Caco-2 (cell line): ENCODE measurements at regions of chr1 and their contacts with region 1.

Region 1: DNA sequence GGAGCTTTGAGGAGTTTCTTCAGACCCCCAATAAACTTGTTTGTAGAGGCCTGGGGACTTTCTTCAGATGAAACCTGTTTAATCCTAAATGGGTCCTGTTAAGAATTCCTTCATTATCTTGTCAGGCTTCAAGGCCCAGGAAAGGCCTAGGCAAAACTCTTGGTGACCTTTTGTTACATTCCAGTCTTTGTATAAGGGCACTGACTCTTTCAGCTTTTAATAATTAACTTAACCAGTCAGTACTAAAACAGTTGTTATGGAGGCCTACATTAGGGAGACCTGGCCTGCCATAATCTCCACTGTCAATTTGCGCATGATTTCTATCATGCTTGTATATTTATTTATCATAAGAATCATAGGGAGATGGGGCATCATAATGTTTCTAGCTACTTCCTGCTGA is 110.2 kb downstream of the FCRL5 start:
- DNase-seq: peak; percentile 72 to 75
- H3K4me3 ChIP-seq: no peak overlapping the region
- H3K4me3 Mint-ChIP-seq: peak overlapping the region; percentile 48
- H3K27ac Mint-ChIP-seq: peak overlapping the region; percentile 79
- H3K4me1 ChIP-seq: peaks cover 51% of the 10 kb centered on the region
- H3K4me1 Mint-ChIP-seq: peaks cover 24% of the 10 kb centered on the region
- H3K27me3 ChIP-seq: no peaks in the 10 kb centered on the region
- H3K27me3 Mint-ChIP-seq: no peaks in the 10 kb centered on the region
- CTCF ChIP-seq: no peak

Region 2: DNA sequence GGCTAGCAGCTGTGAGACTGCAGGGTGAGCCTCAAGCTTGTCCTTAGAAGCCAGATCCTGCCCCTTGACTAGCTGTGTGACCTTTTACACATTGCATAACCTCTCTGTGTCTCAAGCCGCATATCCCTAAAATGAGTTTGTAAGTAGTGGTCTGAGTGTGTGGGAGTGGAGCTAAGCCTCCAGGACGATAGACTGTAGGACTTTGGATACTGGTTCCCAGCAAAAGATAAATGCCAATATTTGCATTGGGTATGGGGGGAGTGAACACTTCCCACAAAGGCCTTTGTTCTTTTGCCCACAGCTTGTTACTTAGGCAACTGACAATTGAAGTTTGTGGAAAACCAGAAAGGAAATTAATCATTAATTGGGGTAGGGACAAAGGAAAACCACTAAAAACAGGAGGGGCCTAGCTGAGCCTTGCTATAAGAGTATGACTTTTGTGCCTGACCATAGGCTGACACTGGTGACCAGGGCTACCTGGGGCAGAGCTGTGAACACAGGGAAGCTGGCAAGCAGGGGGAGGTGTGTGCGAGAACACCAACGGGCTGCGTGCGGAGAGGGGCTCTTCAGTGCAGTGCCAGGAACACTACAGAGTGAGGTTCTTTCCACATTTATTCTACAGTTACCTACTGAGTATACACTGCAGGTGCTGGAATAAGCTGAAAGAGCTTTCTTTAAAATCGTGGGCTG is 201.4 kb before region 1 on chr1:
- CTCF ChIA-PET with region 1: no interaction called
- POLR2A ChIA-PET with region 1: no interaction called
- intact Hi-C with region 1: loop called (anchors 5 kb)
- DNase-seq: peak; percentile 84 to 88
- H3K4me3 ChIP-seq: no peak overlapping the region
- H3K4me3 Mint-ChIP-seq: peak overlapping the region; percentile 36
- H3K27ac Mint-ChIP-seq: peak overlapping the region; percentile 91
- H3K4me1 ChIP-seq: peaks cover 50% of the 10 kb centered on the region
- H3K4me1 Mint-ChIP-seq: peaks cover 43% of the 10 kb centered on the region
- H3K27me3 ChIP-seq: no peaks in the 10 kb centered on the region
- H3K27me3 Mint-ChIP-seq: no peaks in the 10 kb centered on the region
- CTCF ChIP-seq: no peak

Region 3: GRCh38 chr1:157288996-157289395 is 153.1 kb before region 1 on chr1:
- CTCF ChIA-PET with region 1: no interaction called
- POLR2A ChIA-PET with region 1: no interaction called
- intact Hi-C with region 1: no loop called
- DNase-seq: no peak
- H3K4me3 ChIP-seq: no peak overlapping the region
- H3K4me3 Mint-ChIP-seq: no peak overlapping the region
- H3K27ac Mint-ChIP-seq: no peak overlapping the region
- H3K4me1 ChIP-seq: peaks cover 5% of the 10 kb centered on the region; the same call in 1 of the 2 replicates
- H3K4me1 Mint-ChIP-seq: peaks cover 6% of the 10 kb centered on the region
- H3K27me3 ChIP-seq: no peaks in the 10 kb centered on the region
- H3K27me3 Mint-ChIP-seq: no peaks in the 10 kb centered on the region
- CTCF ChIP-seq: no peak

Region 4: GRCh38 chr1:157363660-157364140 is 78.4 kb before region 1 on chr1:
- CTCF ChIA-PET with region 1: no interaction called
- POLR2A ChIA-PET with region 1: no interaction called
- intact Hi-C with region 1: no loop called
- DNase-seq: peak in 1 of 2 experiments; percentile 29
- H3K4me3 ChIP-seq: no peak overlapping the region
- H3K4me3 Mint-ChIP-seq: no peak overlapping the region
- H3K27ac Mint-ChIP-seq: no peak overlapping the region
- H3K4me1 ChIP-seq: peaks cover 35% of the 10 kb centered on the region
- H3K4me1 Mint-ChIP-seq: peaks cover 37% of the 10 kb centered on the region
- H3K27me3 ChIP-seq: no peaks in the 10 kb centered on the region
- H3K27me3 Mint-ChIP-seq: no peaks in the 10 kb centered on the region
- CTCF ChIP-seq: peak; percentile 42 to 45

Region 5: DNA sequence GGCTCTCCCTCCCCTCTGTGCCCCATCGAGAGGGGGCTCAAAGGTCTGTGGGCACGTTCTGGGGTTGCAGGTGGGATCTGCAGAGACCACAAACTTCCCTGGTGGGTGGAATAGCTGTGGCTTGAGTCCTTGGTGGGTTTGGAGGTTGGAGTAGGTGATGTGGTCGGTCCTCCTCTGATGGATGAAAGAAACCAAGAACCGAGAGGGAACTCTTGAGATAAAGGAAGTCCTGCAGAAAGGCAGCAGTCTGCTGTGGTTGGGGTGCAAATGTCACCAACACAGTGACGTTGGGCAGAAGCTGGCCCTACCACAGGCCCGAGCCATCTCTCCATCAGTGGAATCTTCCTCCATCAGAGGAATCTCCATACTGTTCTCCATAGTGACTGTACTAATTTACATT is 61.5 kb before region 1 on chr1:
- CTCF ChIA-PET with region 1: no interaction called
- POLR2A ChIA-PET with region 1: no interaction called
- intact Hi-C with region 1: no loop called
- DNase-seq: no peak
- H3K4me3 ChIP-seq: no peak overlapping the region
- H3K4me3 Mint-ChIP-seq: no peak overlapping the region
- H3K27ac Mint-ChIP-seq: no peak overlapping the region
- H3K4me1 ChIP-seq: no peaks in the 10 kb centered on the region
- H3K4me1 Mint-ChIP-seq: no peaks in the 10 kb centered on the region
- H3K27me3 ChIP-seq: no peaks in the 10 kb centered on the region
- H3K27me3 Mint-ChIP-seq: no peaks in the 10 kb centered on the region
- CTCF ChIP-seq: no peak

Region 6: DNA sequence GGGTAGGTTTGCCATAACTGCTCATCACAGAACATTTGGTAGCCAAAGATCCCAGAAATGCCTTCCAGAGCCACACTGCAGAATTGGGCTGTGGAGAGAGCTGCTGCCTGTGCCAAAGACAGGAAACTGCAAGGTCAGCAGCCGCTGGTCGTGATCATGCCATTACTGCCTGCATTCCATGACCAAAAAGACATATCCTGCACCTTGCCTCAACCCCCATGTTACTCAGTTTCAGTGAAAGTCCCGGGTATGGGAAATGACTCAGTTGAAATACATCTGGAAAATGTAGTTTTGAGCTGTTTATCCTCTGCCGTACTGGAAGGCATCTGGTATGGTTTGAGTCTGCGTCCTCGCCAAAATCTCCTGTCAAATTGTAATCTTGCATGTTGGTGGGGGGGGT is 51.4 kb before region 1 on chr1:
- CTCF ChIA-PET with region 1: no interaction called
- POLR2A ChIA-PET with region 1: no interaction called
- intact Hi-C with region 1: no loop called
- DNase-seq: no peak
- H3K4me3 ChIP-seq: no peak overlapping the region
- H3K4me3 Mint-ChIP-seq: no peak overlapping the region
- H3K27ac Mint-ChIP-seq: no peak overlapping the region
- H3K4me1 ChIP-seq: no peaks in the 10 kb centered on the region; the same call in 1 of the 2 replicates
- H3K4me1 Mint-ChIP-seq: peaks cover 6% of the 10 kb centered on the region
- H3K27me3 ChIP-seq: no peaks in the 10 kb centered on the region
- H3K27me3 Mint-ChIP-seq: no peaks in the 10 kb centered on the region
- CTCF ChIP-seq: no peak

Region 7: GRCh38 chr1:157496121-157496526 is 54.1 kb after region 1 on chr1:
- CTCF ChIA-PET with region 1: no interaction called
- POLR2A ChIA-PET with region 1: no interaction called
- intact Hi-C with region 1: loop called (anchors 1 kb)
- DNase-seq: peak; percentile 64 to 79
- H3K4me3 ChIP-seq: no peak overlapping the region
- H3K4me3 Mint-ChIP-seq: no peak overlapping the region
- H3K27ac Mint-ChIP-seq: peak overlapping the region; percentile 75
- H3K4me1 ChIP-seq: peaks cover 40% of the 10 kb centered on the region
- H3K4me1 Mint-ChIP-seq: peaks cover 44% of the 10 kb centered on the region
- H3K27me3 ChIP-seq: no peaks in the 10 kb centered on the region
- H3K27me3 Mint-ChIP-seq: no peaks in the 10 kb centered on the region
- CTCF ChIP-seq: peak; percentile 71 to 80